ENCODE measurements at regions of chr10 and their contacts with region 1.

Region 1: DNA sequence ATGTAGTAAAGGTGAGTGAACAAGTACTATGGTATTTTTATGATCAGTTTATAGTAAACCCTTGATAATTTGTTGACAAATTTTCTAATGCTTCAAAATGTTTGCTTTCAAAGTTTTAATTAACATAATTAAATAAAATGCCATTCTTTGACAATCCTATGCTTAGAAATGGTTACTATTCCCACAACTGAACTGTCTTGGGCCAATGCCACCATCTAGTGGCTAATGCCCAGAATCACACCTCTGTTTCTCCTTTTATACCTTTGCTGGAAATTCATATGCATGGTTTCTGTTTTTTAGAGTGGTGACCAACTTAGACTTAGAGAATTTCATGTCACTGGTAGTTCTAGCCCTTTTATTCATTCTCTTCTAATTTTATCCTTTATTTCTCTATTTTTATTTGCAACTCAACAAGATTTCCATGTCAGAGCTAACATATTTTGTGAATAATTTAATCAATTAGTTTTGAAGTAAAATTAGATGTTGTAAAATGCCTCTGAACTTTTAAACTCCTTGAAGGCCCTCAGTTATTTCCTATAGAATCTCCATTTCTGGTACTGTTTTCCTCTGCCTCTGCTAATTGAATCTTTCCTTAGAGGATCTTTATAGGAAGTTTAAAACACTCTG is 31.1 kb downstream of the PCGF5 start:
- DNase-seq: peak; percentile 30
- ATAC-seq: peak; percentile 83
- H3K4me3 ChIP-seq: no peak overlapping the region
- H3K27ac ChIP-seq: no peak overlapping the region
- H3K4me1 ChIP-seq: no peaks in the 10 kb centered on the region
- H3K27me3 ChIP-seq: no peaks in the 10 kb centered on the region
- CTCF ChIP-seq: peak; percentile 77 to 90 (median 81); a peak in 5 of 6 replicates
- EP300 ChIP-seq: no peak
- POLR2A ChIP-seq: no peak
- RAD21 ChIP-seq: peak; percentile 99

Region 2: DNA sequence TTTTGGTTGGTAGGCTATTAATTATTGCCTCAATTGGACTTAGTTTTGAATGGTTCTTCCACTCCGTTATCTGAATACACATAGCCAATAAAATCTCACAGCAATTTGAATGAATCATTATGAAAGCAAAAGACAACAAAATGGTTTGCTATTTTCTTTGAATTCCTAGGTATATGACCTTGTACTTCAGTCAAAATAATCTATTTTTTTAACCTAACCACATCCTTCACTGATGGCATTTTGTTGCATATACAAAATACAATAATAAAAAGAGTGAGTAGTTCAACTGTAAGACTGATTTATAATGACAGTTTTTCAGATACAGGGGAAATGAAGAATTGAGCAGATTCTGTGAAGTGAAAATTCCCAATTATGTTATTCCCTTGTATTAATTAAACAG is 826.8 kb before region 1 on chr10:
- CTCF ChIA-PET with region 1: no interaction called
- POLR2A ChIA-PET with region 1: no interaction called
- RAD21 ChIA-PET with region 1: no interaction called
- SMC1A ChIA-PET with region 1: no interaction called
- in situ Hi-C with region 1: no loop called
- intact Hi-C with region 1: no loop called
- DNase-seq: no peak
- ATAC-seq: no peak
- H3K4me3 ChIP-seq: no peak overlapping the region
- H3K27ac ChIP-seq: no peak overlapping the region
- H3K4me1 ChIP-seq: no peaks in the 10 kb centered on the region; the same call in 1 of the 2 replicates
- H3K27me3 ChIP-seq: no peaks in the 10 kb centered on the region; a peak in 1 of 4 replicates
- CTCF ChIP-seq: no peak
- EP300 ChIP-seq: no peak
- POLR2A ChIP-seq: no peak
- RAD21 ChIP-seq: no peak

Region 3: GRCh38 chr10:90879062-90879461 is 372.5 kb before region 1 on chr10:
- CTCF ChIA-PET with region 1: interaction called, 29 read pairs
- POLR2A ChIA-PET with region 1: no interaction called
- RAD21 ChIA-PET with region 1: interaction called, 7 read pairs
- SMC1A ChIA-PET with region 1: interaction called, 30 read pairs
- in situ Hi-C with region 1: no loop called
- intact Hi-C with region 1: no loop called
- DNase-seq: no peak
- ATAC-seq: no peak
- H3K4me3 ChIP-seq: no peak overlapping the region
- H3K27ac ChIP-seq: no peak overlapping the region
- H3K4me1 ChIP-seq: 0 out of 2 replicates have a peak, but pooled peaks cover 7% of the 10 kb centered on the region
- H3K27me3 ChIP-seq: no peaks in the 10 kb centered on the region
- CTCF ChIP-seq: no peak
- EP300 ChIP-seq: no peak
- POLR2A ChIP-seq: no peak
- RAD21 ChIP-seq: no peak

Region 4: GRCh38 chr10:90993340-90993739 is 258.2 kb before region 1 on chr10:
- CTCF ChIA-PET with region 1: interaction called, 289 read pairs
- POLR2A ChIA-PET with region 1: no interaction called
- RAD21 ChIA-PET with region 1: interaction called, 28 read pairs
- SMC1A ChIA-PET with region 1: interaction called, 296 read pairs
- in situ Hi-C with region 1: no loop called
- intact Hi-C with region 1: no loop called
- DNase-seq: no peak
- ATAC-seq: peak; percentile 50
- H3K4me3 ChIP-seq: peak overlapping the region; percentile 66
- H3K27ac ChIP-seq: peak overlapping the region; percentile 88
- H3K4me1 ChIP-seq: peaks cover 20% of the 10 kb centered on the region
- H3K27me3 ChIP-seq: no peaks in the 10 kb centered on the region
- CTCF ChIP-seq: no peak
- EP300 ChIP-seq: peak; percentile 41 to 86; a peak in 2 of 4 replicates
- POLR2A ChIP-seq: no peak
- RAD21 ChIP-seq: no peak

Region 5: GRCh38 chr10:91017198-91017597 is 234.3 kb before region 1 on chr10:
- CTCF ChIA-PET with region 1: interaction called, 9 read pairs
- POLR2A ChIA-PET with region 1: no interaction called
- RAD21 ChIA-PET with region 1: interaction called, 8 read pairs
- SMC1A ChIA-PET with region 1: interaction called, 13 read pairs
- in situ Hi-C with region 1: no loop called
- intact Hi-C with region 1: no loop called
- DNase-seq: no peak
- ATAC-seq: peak; percentile 58
- H3K4me3 ChIP-seq: no peak overlapping the region
- H3K27ac ChIP-seq: no peak overlapping the region; the same call in 1 of the 2 replicates
- H3K4me1 ChIP-seq: no peaks in the 10 kb centered on the region
- H3K27me3 ChIP-seq: no peaks in the 10 kb centered on the region
- CTCF ChIP-seq: no peak
- EP300 ChIP-seq: no peak
- POLR2A ChIP-seq: no peak
- RAD21 ChIP-seq: no peak

Region 6: DNA sequence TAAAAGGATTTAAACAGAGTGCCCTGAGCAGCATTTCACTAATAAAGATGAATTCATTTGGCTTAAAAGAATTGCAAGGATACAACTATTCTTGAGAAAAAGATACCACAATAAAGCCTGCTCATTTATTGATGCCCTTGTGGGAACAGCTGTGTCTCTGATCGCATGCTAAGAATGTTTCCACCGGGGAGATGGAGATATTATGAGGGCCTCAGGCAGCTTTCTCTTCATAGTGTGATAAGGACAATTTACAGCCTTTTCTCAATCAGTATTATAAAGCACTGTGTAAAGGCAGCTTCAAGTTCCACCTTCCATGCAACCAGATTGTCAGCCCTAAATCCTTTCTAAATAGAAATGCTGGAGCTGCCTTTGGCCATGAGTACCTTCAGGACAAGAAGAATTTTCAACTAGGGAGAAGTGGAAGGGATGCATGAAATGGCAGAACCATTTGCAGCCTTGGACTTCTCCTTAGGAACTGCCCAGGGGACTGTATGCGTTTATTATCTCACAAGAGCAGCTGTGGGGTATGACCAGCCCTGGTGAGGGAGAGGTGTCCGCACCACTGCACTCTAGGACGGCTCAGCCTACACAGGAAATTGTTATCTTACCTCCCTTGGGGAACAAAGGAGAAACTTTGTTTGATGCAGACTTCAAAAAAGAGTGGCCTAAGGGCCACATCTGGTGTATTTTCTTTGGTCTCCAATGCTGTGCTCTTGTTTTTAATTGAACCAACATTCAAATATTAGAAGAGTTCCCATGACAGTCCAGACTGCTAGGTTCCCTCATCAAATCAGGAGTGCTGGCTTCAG is 148.0 kb before region 1 on chr10:
- CTCF ChIA-PET with region 1: interaction called, 10 read pairs
- POLR2A ChIA-PET with region 1: no interaction called
- RAD21 ChIA-PET with region 1: interaction called, 7 read pairs
- SMC1A ChIA-PET with region 1: interaction called, 5 read pairs
- in situ Hi-C with region 1: no loop called
- intact Hi-C with region 1: loop called (anchors 5 kb)
- DNase-seq: peak; percentile 17
- ATAC-seq: peak; percentile 78
- H3K4me3 ChIP-seq: no peak overlapping the region
- H3K27ac ChIP-seq: no peak overlapping the region
- H3K4me1 ChIP-seq: peaks cover 22% of the 10 kb centered on the region
- H3K27me3 ChIP-seq: no peaks in the 10 kb centered on the region
- CTCF ChIP-seq: no peak
- EP300 ChIP-seq: no peak
- POLR2A ChIP-seq: no peak
- RAD21 ChIP-seq: no peak

Region 7: GRCh38 chr10:91198781-91199180 is 52.8 kb before region 1 on chr10:
- CTCF ChIA-PET with region 1: interaction called, 16 read pairs
- POLR2A ChIA-PET with region 1: interaction called, 4 read pairs
- RAD21 ChIA-PET with region 1: interaction called, 26 read pairs
- SMC1A ChIA-PET with region 1: interaction called, 28 read pairs
- in situ Hi-C with region 1: no loop called
- intact Hi-C with region 1: no loop called
- DNase-seq: peak; percentile 68
- ATAC-seq: peak; percentile 70
- H3K4me3 ChIP-seq: peak overlapping the region; percentile 53
- H3K27ac ChIP-seq: peak overlapping the region; percentile 61
- H3K4me1 ChIP-seq: peaks cover 47% of the 10 kb centered on the region
- H3K27me3 ChIP-seq: no peaks in the 10 kb centered on the region
- CTCF ChIP-seq: no peak
- EP300 ChIP-seq: peak in 1 of 2 experiments; percentile 15; a peak in 1 of 4 replicates
- POLR2A ChIP-seq: no peak
- RAD21 ChIP-seq: no peak

Region 8: DNA sequence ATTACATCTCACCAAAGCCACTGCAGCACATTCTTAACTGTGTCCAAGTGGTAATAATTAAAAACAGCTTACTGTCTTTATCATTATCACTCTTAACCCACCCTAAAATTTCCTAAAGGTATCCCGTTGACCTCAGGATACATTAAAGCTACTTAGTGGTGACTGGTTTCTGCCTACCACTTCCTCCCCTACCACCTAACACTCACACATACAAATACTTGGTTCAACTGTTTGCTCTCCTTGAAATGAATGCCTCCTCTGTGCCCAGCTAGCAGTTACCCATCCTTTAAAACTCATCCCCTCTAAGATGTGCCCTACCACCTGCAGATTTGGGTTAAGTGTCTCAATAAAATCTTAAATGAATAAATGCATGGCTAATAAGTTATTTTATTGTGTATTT is 24.0 kb before region 1 on chr10:
- CTCF ChIA-PET with region 1: interaction called, 12 read pairs
- POLR2A ChIA-PET with region 1: interaction called, 13 read pairs
- RAD21 ChIA-PET with region 1: interaction called, 30 read pairs
- SMC1A ChIA-PET with region 1: interaction called, 47 read pairs
- in situ Hi-C with region 1: no loop called
- intact Hi-C with region 1: no loop called
- DNase-seq: no peak
- ATAC-seq: peak; percentile 71
- H3K4me3 ChIP-seq: no peak overlapping the region
- H3K27ac ChIP-seq: no peak overlapping the region
- H3K4me1 ChIP-seq: peaks cover 8% of the 10 kb centered on the region
- H3K27me3 ChIP-seq: no peaks in the 10 kb centered on the region
- CTCF ChIP-seq: no peak
- EP300 ChIP-seq: no peak
- POLR2A ChIP-seq: no peak
- RAD21 ChIP-seq: no peak

Measured in GM12878 (cell line).